ENCODE measurements at regions of chr4 and their contacts with region 1.

Region 1: GRCh38 chr4:86895692-86896488 is 3.7 kb upstream of the C4orf36 start:
- DNase-seq: peak in 4 of 5 donors; percentile 53 to 65 (median 56)
- H3K4me3 ChIP-seq: no peak overlapping the region
- H3K4me3 Mint-ChIP-seq: no peak overlapping the region
- H3K27ac ChIP-seq: no peak overlapping the region
- H3K27ac Mint-ChIP-seq: no peak overlapping the region
- H3K4me1 ChIP-seq: peaks cover 14% of the 10 kb centered on the region
- H3K4me1 Mint-ChIP-seq: peaks cover 5 to 10% (median 8%) of the 10 kb centered on the region in 4 donors
- H3K27me3 ChIP-seq: no peaks in the 10 kb centered on the region
- H3K27me3 Mint-ChIP-seq: peaks cover 3 to 14% of the 10 kb centered on the region in 2 donors

Region 2: DNA sequence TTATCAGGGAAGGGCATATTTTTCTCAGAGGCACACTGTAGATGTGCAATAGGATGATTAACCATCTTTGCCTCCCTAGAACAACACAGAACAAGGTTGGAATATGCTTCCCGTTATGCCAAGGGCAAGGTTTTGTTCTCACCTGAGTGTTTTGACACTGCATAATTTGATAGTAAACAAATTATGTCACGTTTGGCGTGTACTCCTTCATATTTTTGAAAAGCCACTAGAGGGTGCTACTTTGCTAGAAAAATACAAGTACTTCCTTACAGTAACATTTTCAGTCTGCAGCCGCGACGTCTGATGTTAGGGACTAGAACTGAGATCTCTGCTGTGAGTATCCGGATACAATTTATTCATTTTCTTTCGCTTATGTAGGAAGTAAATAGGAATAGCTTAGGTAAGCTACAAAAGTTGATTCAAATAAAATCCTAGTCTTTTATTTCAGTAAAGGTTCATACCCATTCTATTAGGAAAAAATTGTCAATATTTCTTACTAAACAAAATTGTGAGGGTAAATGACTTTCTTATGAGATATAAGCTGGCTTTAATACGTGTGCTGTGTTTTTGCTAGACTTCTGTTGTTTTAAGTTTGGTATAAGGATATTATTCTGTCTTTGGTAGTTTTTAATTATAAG is 1748.3 kb before region 1 on chr4:
- CTCF ChIA-PET with region 1: no interaction called
- POLR2A ChIA-PET with region 1: no interaction called
- intact Hi-C with region 1: loop called (anchors 5 kb)
- DNase-seq: peak in 3 of 5 donors; percentile 1 to 5 (median 2)
- H3K4me3 ChIP-seq: no peak overlapping the region
- H3K4me3 Mint-ChIP-seq: no peak overlapping the region
- H3K27ac ChIP-seq: no peak overlapping the region
- H3K27ac Mint-ChIP-seq: no peak overlapping the region
- H3K4me1 ChIP-seq: no peaks in the 10 kb centered on the region
- H3K4me1 Mint-ChIP-seq: peaks cover 0 to 2% (median 0%) of the 10 kb centered on the region in 4 donors
- H3K27me3 ChIP-seq: no peaks in the 10 kb centered on the region
- H3K27me3 Mint-ChIP-seq: peaks cover 2% of the 10 kb centered on the region in 2 donors

Region 3: GRCh38 chr4:86261636-86262035 is 634.3 kb before region 1 on chr4:
- CTCF ChIA-PET with region 1: no interaction called
- POLR2A ChIA-PET with region 1: no interaction called
- intact Hi-C with region 1: no loop called
- DNase-seq: no peak
- H3K4me3 ChIP-seq: no peak overlapping the region
- H3K4me3 Mint-ChIP-seq: no peak overlapping the region
- H3K27ac ChIP-seq: no peak overlapping the region
- H3K27ac Mint-ChIP-seq: no peak overlapping the region
- H3K4me1 ChIP-seq: no peaks in the 10 kb centered on the region
- H3K4me1 Mint-ChIP-seq: no peaks in the 10 kb centered on the region
- H3K27me3 ChIP-seq: no peaks in the 10 kb centered on the region
- H3K27me3 Mint-ChIP-seq: no peaks in the 10 kb centered on the region

Region 4: GRCh38 chr4:86522349-86522748 is 373.5 kb before region 1 on chr4:
- CTCF ChIA-PET with region 1: interaction called, 18 read pairs
- POLR2A ChIA-PET with region 1: no interaction called
- intact Hi-C with region 1: loop called (anchors 1 kb)
- DNase-seq: peak in 4 of 5 donors; percentile 16 to 29 (median 18)
- H3K4me3 ChIP-seq: no peak overlapping the region
- H3K4me3 Mint-ChIP-seq: no peak overlapping the region
- H3K27ac ChIP-seq: no peak overlapping the region
- H3K27ac Mint-ChIP-seq: peak overlapping the region in 2 of 7 donors; percentile 16 to 43
- H3K4me1 ChIP-seq: no peaks in the 10 kb centered on the region
- H3K4me1 Mint-ChIP-seq: peaks cover 0 to 4% (median 0%) of the 10 kb centered on the region in 4 donors
- H3K27me3 ChIP-seq: no peaks in the 10 kb centered on the region
- H3K27me3 Mint-ChIP-seq: peaks cover 4 to 8% of the 10 kb centered on the region in 2 donors

Measured in CD4-positive, alpha-beta memory T cell (primary cell).